ENCODE measurements at regions of chr11 and their contacts with region 1.

Region 1: GRCh38 chr11:16605894-16606783 is 132.3 kb upstream of the C11orf58 start:
- DNase-seq: no peak
- H3K4me3 ChIP-seq: peak overlapping the region; percentile 53 to 59
- H3K27ac ChIP-seq: peak overlapping the region; percentile 81
- H3K4me1 ChIP-seq: peaks cover 33% of the 10 kb centered on the region
- H3K27me3 ChIP-seq: peaks cover 7% of the 10 kb centered on the region
- CTCF ChIP-seq: peak; percentile 59 to 87 (median 75)
- POLR2A ChIP-seq: no peak

Region 2: DNA sequence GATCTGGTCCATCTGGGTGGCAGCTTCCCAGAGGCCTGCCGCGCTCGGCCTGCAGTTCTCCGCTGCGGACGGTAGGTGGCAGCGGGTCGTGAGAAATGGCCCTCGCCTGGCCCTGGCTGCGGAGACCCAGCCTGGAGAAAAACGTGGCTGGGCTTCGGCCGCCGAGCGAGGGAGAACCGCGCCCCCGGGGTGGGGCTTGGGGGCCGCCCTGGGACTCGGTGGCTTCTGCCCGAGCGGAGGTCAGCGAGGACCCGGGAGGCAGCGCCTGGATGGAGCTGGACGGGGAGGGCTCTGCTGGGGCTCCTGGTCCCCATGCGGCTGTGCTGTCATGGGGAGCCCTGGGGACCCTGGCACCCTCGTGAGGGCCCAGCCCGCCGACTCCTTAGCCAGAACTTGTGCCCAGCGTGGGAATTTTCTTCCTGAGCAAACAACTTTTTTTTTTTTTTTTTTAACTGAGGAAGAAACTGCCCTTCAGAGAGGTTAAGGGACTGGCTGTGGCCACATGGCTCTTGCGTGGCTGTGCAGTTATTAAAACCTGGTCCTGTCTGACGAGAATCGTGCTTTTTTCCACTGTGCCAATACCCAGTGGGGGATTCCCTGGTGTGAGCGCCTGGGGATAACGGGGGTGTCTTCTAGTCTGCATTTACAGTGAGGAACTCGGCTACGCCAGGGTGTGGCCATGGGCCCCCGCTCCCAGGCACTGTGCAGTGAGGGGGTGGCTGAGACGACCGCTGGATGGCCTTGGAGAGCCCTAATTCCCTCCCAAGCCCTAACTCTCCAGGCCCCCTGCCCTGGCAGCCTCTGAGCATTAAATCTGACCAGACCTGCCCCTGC is 955.8 kb before region 1 on chr11:
- intact Hi-C with region 1: loop called (anchors 5 kb)
- DNase-seq: peak in 1 of 2 donors; percentile 91
- H3K4me3 ChIP-seq: peak overlapping the region; percentile 36 to 48
- H3K27ac ChIP-seq: peak overlapping the region; percentile 56
- H3K4me1 ChIP-seq: peaks cover 11% of the 10 kb centered on the region
- H3K27me3 ChIP-seq: no peaks in the 10 kb centered on the region
- CTCF ChIP-seq: peak; percentile 88 to 94 (median 92)
- POLR2A ChIP-seq: no peak

Region 3: DNA sequence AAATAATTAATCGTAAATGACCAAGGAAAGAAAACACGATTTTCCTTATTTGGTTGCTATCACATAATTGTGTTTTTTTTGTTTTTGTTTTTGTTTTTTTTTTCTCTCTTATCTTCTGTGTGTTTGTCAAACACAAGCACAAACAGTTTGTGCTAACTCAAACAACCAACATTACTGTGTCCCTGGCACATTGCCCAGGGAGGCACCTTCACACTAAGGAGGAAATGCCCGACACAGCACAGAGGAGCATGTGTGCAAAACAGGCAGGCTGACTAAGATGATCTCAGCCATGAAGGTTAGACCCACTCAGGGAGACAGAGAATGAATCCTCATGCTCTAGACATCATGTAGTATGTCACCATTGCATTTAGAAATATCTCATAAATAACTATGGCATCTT is 379.9 kb before region 1 on chr11:
- intact Hi-C with region 1: no loop called
- DNase-seq: no peak
- H3K4me3 ChIP-seq: no peak overlapping the region
- H3K27ac ChIP-seq: no peak overlapping the region
- H3K4me1 ChIP-seq: no peaks in the 10 kb centered on the region
- H3K27me3 ChIP-seq: no peaks in the 10 kb centered on the region
- CTCF ChIP-seq: no peak
- POLR2A ChIP-seq: no peak